Body of pancreas (tissue), 4 donors: ENCODE measurements at regions of chr18 and their contacts with region 1.

Region 1: GRCh38 chr18:62186774-62187542 is at the starts of genes PIGN and RELCH:
- DNase-seq: peak; percentile 94 to 99 (median 96)
- ATAC-seq: peak; percentile 98
- H3K4me3 ChIP-seq: peak within 1 kb of the TSS; percentile 81 to 100
- H3K27ac ChIP-seq: peak within 1 kb of the TSS; percentile 65 to 92 (median 82)
- H3K4me1 ChIP-seq: peaks cover 41% of the 10 kb centered on the region
- H3K27me3 ChIP-seq: no peaks in the 10 kb centered on the region
- CTCF ChIP-seq: no peak
- POLR2A ChIP-seq: peak; percentile 73 to 96 (median 96)
- total RNA-seq, gene PIGN: 22.6 to 28.7 TPM
- total RNA-seq, gene RELCH: 13.5 to 51.4 TPM

Region 2: GRCh38 chr18:62249478-62250097 is 62.6 kb after region 1 on chr18:
- intact Hi-C with region 1: loop called (anchors 5 kb)
- DNase-seq: peak; percentile 78 to 90 (median 87)
- ATAC-seq: peak; percentile 42
- H3K4me3 ChIP-seq: no peak overlapping the region
- H3K27ac ChIP-seq: no peak overlapping the region
- H3K4me1 ChIP-seq: peaks cover 6% of the 10 kb centered on the region
- H3K27me3 ChIP-seq: no peaks in the 10 kb centered on the region
- CTCF ChIP-seq: peak; percentile 51 to 88 (median 70)
- POLR2A ChIP-seq: no peak

Region 3: DNA sequence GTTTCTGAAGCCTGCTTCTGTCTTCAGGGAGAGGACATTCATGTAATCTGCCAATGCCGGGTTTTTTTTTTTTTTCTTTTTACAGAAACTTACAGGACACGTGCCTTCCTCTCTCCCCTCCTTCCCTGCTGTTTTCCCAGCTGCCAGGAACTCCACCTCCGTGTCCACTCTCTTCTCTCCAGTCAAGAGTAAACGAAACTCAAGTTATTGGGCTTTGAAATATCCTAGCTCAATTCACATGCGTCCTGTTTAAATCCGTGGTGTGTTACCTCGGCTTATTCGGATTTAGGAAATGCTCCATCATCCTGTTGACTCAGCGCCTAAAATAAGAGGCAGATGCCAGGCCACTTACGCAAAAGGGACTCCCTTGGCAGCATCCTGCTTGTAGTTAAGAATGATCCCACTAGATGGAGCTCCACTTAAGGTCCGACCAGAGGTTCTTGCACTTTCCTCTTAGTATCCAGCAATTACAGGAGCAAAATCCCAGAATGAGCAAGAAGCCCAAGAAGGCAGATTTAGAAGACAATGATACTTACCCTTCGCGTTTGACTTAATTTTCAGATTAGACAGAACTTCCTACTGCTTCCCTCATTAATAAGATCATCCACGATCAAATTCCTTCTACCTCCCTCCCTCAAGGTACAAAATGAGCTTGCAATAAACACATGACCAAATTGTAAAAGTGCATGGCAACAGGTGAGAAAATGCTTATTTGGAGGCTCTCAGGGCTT is 238.7 kb after region 1 on chr18:
- intact Hi-C with region 1: no loop called
- DNase-seq: peak; percentile 81 to 93 (median 82)
- ATAC-seq: peak; percentile 90
- H3K4me3 ChIP-seq: no peak overlapping the region
- H3K27ac ChIP-seq: peak overlapping the region in 3 of 4 donors; percentile 64 to 74 (median 72)
- H3K4me1 ChIP-seq: peaks cover 12% of the 10 kb centered on the region
- H3K27me3 ChIP-seq: no peaks in the 10 kb centered on the region
- CTCF ChIP-seq: peak; percentile 68 to 95 (median 92)
- POLR2A ChIP-seq: peak in 1 of 3 donors; percentile 12